OCI-LY7 (cell line): ENCODE measurements at regions of chr5 and their contacts with region 1.

Region 1: GRCh38 chr5:102312586-102312985 is 16.5 kb upstream of the SLCO4C1 start:
- DNase-seq: no peak
- H3K4me3 ChIP-seq: no peak overlapping the region
- H3K27ac ChIP-seq: no peak overlapping the region
- H3K4me1 ChIP-seq: no peaks in the 10 kb centered on the region
- CTCF ChIP-seq: no peak

Region 2: GRCh38 chr5:101473483-101473882 is 839.1 kb before region 1 on chr5:
- CTCF ChIA-PET with region 1: no interaction called
- POLR2A ChIA-PET with region 1: no interaction called
- intact Hi-C with region 1: no loop called
- DNase-seq: no peak
- H3K4me3 ChIP-seq: no peak overlapping the region
- H3K27ac ChIP-seq: no peak overlapping the region
- H3K4me1 ChIP-seq: no peaks in the 10 kb centered on the region
- CTCF ChIP-seq: no peak

Region 3: DNA sequence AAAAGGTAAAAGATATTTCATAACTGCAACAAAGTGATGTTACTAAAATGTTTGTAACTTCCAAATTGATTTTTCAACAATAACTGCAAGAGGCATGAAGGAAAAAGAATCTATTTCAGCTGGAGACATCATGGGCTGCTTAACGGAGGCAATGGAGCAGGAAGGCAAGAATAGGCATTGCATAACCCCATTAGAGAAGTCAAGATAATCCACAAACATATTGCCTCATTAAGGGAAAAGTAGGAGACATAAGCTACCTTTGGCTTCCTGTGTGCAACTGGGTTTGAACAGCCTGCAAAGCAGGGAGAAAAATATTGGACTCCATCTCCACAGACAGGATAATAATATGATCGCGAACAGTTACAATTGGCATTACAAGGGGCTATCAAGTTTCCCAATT is 63.2 kb before region 1 on chr5:
- CTCF ChIA-PET with region 1: no interaction called
- POLR2A ChIA-PET with region 1: interaction called, 10 read pairs
- intact Hi-C with region 1: no loop called
- DNase-seq: no peak
- H3K4me3 ChIP-seq: no peak overlapping the region
- H3K27ac ChIP-seq: no peak overlapping the region
- H3K4me1 ChIP-seq: no peaks in the 10 kb centered on the region
- CTCF ChIP-seq: no peak

Region 4: GRCh38 chr5:102591650-102592049 is 279.1 kb after region 1 on chr5:
- CTCF ChIA-PET with region 1: no interaction called
- POLR2A ChIA-PET with region 1: no interaction called
- intact Hi-C with region 1: no loop called
- DNase-seq: no peak
- H3K4me3 ChIP-seq: no peak overlapping the region
- H3K27ac ChIP-seq: no peak overlapping the region
- H3K4me1 ChIP-seq: no peaks in the 10 kb centered on the region
- CTCF ChIP-seq: no peak